GM12878 (cell line): ENCODE measurements at regions of chr1 and their contacts with region 1.

Region 1: GRCh38 chr1:48196237-48196636 is 26.3 kb upstream of the SLC5A9 start:
- DNase-seq: no peak
- ATAC-seq: no peak
- H3K4me3 ChIP-seq: no peak overlapping the region
- H3K27ac ChIP-seq: no peak overlapping the region
- H3K4me1 ChIP-seq: no peaks in the 10 kb centered on the region
- H3K27me3 ChIP-seq: no peaks in the 10 kb centered on the region
- CTCF ChIP-seq: no peak
- EP300 ChIP-seq: no peak
- POLR2A ChIP-seq: no peak
- RAD21 ChIP-seq: no peak

Region 2: DNA sequence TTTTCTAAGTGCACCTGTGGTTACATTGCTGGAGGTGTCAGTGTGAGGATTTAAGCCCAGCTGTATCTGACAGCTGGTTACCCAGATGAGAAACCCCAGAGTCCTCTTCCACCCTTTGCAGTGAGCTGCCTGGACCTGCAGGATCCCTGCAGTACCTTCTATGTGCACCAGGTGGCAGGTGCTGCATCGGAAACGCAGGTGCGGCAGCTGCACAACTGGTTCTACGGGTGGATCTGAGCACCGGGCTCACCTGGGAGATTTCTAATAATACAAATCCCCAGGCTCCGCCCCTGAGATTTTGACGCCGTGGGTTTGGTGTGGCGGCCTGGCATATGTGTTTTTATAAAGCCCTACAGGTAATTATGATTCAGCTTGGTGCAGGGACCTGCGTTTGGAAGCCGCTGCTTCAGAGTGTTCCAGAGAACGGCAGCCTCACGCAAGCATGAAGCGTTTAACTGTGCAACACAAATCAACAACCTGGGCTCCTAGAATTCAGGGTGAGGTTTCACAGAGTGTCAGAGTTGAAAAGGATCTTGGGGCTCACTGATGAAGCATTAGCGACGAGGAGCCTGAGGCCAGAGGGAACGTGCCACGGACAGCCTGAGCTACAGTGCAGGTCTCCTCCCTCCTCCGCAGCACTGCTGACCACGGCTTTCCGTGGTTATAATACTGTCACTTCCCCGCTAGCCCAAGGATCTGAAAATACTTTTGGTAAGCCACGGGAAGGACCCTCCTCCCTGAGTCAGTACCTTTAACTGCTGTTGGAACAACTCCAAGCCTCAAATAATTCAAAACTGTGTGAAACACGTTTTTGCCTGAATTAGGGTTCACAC is 102.3 kb before region 1 on chr1:
- CTCF ChIA-PET with region 1: interaction called, 14 read pairs
- POLR2A ChIA-PET with region 1: no interaction called
- RAD21 ChIA-PET with region 1: no interaction called
- SMC1A ChIA-PET with region 1: no interaction called
- in situ Hi-C with region 1: loop called (anchors 5 kb)
- intact Hi-C with region 1: no loop called
- DNase-seq: no peak
- ATAC-seq: peak; percentile 95
- H3K4me3 ChIP-seq: no peak overlapping the region
- H3K27ac ChIP-seq: no peak overlapping the region
- H3K4me1 ChIP-seq: no peaks in the 10 kb centered on the region
- H3K27me3 ChIP-seq: no peaks in the 10 kb centered on the region; a peak in 1 of 4 replicates
- CTCF ChIP-seq: peak; percentile 75 to 93 (median 88)
- EP300 ChIP-seq: no peak
- POLR2A ChIP-seq: no peak
- RAD21 ChIP-seq: peak; percentile 62

Region 3: DNA sequence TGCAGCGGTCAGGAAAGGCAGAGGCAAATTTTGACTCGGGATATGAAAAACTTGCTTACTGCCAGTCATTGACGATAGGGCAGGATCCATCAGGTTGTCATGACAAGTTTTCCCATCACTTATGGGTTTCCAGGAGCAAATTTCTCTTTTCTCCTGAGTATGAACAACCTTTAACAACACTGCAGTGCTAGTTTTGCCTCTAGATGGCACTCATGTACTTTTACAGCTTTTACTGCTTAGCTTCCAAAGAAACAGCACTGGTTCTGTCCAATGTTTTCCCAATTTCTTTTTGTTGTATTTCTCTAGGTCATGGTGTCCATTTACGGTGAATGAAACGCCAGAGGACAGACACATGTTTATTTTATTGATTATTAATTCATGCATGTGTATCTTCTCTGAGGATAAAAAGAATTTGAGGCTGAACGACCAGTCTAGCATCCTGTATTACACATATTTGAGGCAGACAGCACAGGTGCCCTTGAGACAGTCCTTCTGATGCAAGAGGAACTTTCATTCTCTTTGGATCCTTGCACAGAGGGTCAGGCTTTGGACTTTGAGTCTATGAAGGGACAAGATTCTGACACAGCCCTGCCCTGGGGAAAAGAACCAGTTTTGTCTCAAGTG is 86.7 kb before region 1 on chr1:
- CTCF ChIA-PET with region 1: interaction called, 100 read pairs
- POLR2A ChIA-PET with region 1: no interaction called
- RAD21 ChIA-PET with region 1: no interaction called
- SMC1A ChIA-PET with region 1: interaction called, 27 read pairs
- in situ Hi-C with region 1: no loop called
- intact Hi-C with region 1: no loop called
- DNase-seq: no peak
- ATAC-seq: peak; percentile 63
- H3K4me3 ChIP-seq: no peak overlapping the region
- H3K27ac ChIP-seq: no peak overlapping the region
- H3K4me1 ChIP-seq: no peaks in the 10 kb centered on the region
- H3K27me3 ChIP-seq: no peaks in the 10 kb centered on the region
- CTCF ChIP-seq: peak; percentile 71 to 83 (median 78); a peak in 5 of 6 replicates
- EP300 ChIP-seq: no peak
- POLR2A ChIP-seq: no peak
- RAD21 ChIP-seq: peak; percentile 85

Region 4: DNA sequence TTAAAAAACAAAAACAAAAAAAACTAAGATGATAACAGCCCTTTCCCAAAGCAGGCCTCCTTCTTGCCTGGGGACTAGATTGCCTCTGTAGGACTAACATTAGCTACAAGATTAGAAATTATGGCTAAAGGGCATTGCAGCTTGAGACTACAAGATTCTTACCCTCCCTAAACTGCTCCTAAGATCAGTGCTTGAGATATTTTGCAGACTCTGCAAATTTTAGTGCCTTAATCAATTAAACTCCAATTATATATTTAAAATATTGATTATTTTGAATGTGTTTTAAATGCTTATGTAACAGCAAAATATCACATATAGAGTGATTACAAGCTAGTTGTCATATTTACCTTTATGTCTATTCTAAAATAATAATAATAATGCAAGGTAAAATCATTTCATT is 21.1 kb before region 1 on chr1:
- CTCF ChIA-PET with region 1: no interaction called
- POLR2A ChIA-PET with region 1: no interaction called
- RAD21 ChIA-PET with region 1: no interaction called
- SMC1A ChIA-PET with region 1: no interaction called
- in situ Hi-C with region 1: no loop called
- intact Hi-C with region 1: no loop called
- DNase-seq: no peak
- ATAC-seq: no peak
- H3K4me3 ChIP-seq: no peak overlapping the region
- H3K27ac ChIP-seq: no peak overlapping the region
- H3K4me1 ChIP-seq: no peaks in the 10 kb centered on the region
- H3K27me3 ChIP-seq: no peaks in the 10 kb centered on the region
- CTCF ChIP-seq: no peak
- EP300 ChIP-seq: no peak
- POLR2A ChIP-seq: no peak
- RAD21 ChIP-seq: no peak

Region 5: GRCh38 chr1:48227165-48228013 is 31.2 kb after region 1 on chr1:
- CTCF ChIA-PET with region 1: no interaction called
- POLR2A ChIA-PET with region 1: no interaction called
- RAD21 ChIA-PET with region 1: no interaction called
- SMC1A ChIA-PET with region 1: no interaction called
- in situ Hi-C with region 1: no loop called
- intact Hi-C with region 1: no loop called
- DNase-seq: no peak
- ATAC-seq: no peak
- H3K4me3 ChIP-seq: no peak overlapping the region
- H3K27ac ChIP-seq: no peak overlapping the region
- H3K4me1 ChIP-seq: no peaks in the 10 kb centered on the region
- H3K27me3 ChIP-seq: no peaks in the 10 kb centered on the region
- CTCF ChIP-seq: no peak
- EP300 ChIP-seq: no peak
- POLR2A ChIP-seq: no peak
- RAD21 ChIP-seq: no peak